Common myeloid progenitor, CD34-positive (primary cell): ENCODE measurements at regions of chr3 and their contacts with region 1.

Region 1: GRCh38 chr3:34260271-34261006 is 462.0 kb downstream of the PDCD6IP start:
- DNase-seq: peak; percentile 57 to 78 (median 75)
- H3K4me3 ChIP-seq: no peak overlapping the region
- H3K27ac ChIP-seq: no peak overlapping the region
- H3K4me1 ChIP-seq: peaks cover 7 to 39% (median 27%) of the 10 kb centered on the region in 4 experiments
- H3K27me3 ChIP-seq: no peaks in the 10 kb centered on the region

Region 2: GRCh38 chr3:33915791-33916546 is 344.5 kb before region 1 on chr3:
- CTCF ChIA-PET with region 1: interaction called, 10 read pairs
- POLR2A ChIA-PET with region 1: no interaction called
- DNase-seq: peak; percentile 38 to 69 (median 52)
- H3K4me3 ChIP-seq: no peak overlapping the region
- H3K27ac ChIP-seq: no peak overlapping the region
- H3K4me1 ChIP-seq: peaks cover 11 to 49% (median 36%) of the 10 kb centered on the region in 4 experiments
- H3K27me3 ChIP-seq: no peaks in the 10 kb centered on the region

Region 3: GRCh38 chr3:34248352-34248751 is 12.1 kb before region 1 on chr3:
- CTCF ChIA-PET with region 1: interaction called, 31 read pairs
- POLR2A ChIA-PET with region 1: no interaction called
- DNase-seq: no peak
- H3K4me3 ChIP-seq: no peak overlapping the region
- H3K27ac ChIP-seq: no peak overlapping the region
- H3K4me1 ChIP-seq: no peaks in the 10 kb centered on the region
- H3K27me3 ChIP-seq: no peaks in the 10 kb centered on the region

Region 4: DNA sequence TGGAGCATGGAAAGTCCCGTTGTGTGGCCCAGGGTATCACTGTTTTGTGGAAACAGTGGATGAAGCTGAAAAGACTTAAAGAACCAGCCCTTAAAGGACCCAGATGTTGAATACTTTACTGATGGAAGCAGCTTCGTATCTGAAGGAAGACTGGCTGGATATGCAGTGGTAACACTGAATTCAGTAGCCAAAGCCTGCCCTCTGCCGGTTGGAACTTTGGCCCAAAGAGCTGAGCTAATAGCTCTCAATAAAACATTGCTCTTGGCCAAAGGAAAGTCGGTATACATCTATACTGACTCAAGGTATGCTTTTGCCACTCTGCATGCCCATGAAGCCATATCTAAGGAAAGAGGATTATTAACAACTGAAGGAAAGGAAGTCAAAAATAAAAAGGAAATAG is 423.4 kb after region 1 on chr3:
- CTCF ChIA-PET with region 1: interaction called, 11 read pairs
- POLR2A ChIA-PET with region 1: no interaction called
- DNase-seq: peak; percentile 42 to 70 (median 66)
- H3K4me3 ChIP-seq: no peak overlapping the region
- H3K27ac ChIP-seq: no peak overlapping the region
- H3K4me1 ChIP-seq: no peaks in the 10 kb centered on the region
- H3K27me3 ChIP-seq: no peaks in the 10 kb centered on the region